ENCODE measurements at regions of chr2 and their contacts with region 1.

Region 1: GRCh38 chr2:85888684-85889626 is at the start of gene ST3GAL5:
- DNase-seq: peak; percentile 95
- H3K4me3 Mint-ChIP-seq: peak within 1 kb of the TSS; percentile 87
- H3K27ac Mint-ChIP-seq: peak within 1 kb of the TSS; percentile 93
- H3K4me1 Mint-ChIP-seq: peaks cover 68% of the 10 kb centered on the region
- H3K27me3 Mint-ChIP-seq: peaks cover 4% of the 10 kb centered on the region

Region 2: DNA sequence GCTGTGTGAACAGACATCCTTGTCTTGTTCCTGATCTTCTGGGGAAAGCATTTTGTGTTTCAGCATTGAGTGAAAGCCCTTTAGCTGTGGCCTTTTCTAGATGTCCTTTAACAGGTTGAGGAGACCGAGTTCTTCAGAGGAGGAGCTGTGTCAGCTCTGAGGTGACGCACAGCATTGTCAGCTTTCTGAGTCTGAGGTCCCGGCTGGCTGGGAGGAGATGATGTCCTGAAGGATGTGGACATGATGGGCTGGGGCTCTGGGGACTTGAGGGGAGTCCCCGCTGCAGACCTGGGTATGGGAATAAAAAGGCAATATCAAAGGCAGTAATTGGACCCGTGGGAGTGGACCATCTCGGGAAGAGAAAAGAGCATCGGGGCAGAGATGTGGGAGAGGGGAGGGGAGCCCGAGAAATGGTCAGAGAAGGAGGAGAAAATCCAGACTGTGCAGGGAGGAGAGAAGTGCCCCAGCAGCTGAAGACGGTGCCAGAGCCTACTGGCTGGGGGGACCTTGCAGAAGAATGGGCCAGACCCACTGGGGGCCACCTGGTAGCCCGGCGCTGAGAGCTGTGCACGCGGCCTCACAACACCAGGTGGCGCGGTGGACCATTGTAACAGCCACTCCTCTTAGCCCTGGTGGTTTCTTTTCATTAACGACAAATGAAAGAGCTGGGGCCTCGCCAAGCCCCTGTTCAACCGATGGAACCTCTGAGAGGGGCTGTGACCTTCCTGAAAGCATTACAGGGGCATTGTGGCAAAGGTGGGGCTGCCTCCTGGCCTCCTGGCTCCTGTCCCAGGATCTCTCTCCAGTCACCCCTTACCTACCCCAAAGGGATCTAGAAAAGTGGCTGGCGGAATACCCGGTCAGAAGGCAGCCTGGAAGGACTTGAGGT is 61.7 kb before region 1 on chr2:
- CTCF ChIA-PET with region 1: interaction called, 170 read pairs
- DNase-seq: peak; percentile 88
- H3K4me3 Mint-ChIP-seq: no peak overlapping the region
- H3K27ac Mint-ChIP-seq: no peak overlapping the region
- H3K4me1 Mint-ChIP-seq: peaks cover 33% of the 10 kb centered on the region
- H3K27me3 Mint-ChIP-seq: peaks cover 31% of the 10 kb centered on the region

Region 3: GRCh38 chr2:85852937-85853498 is 35.9 kb before region 1 on chr2:
- CTCF ChIA-PET with region 1: interaction called, 15 read pairs
- DNase-seq: peak; percentile 77
- H3K4me3 Mint-ChIP-seq: peak overlapping the region; percentile 80
- H3K27ac Mint-ChIP-seq: peak overlapping the region; percentile 100
- H3K4me1 Mint-ChIP-seq: peaks cover 75% of the 10 kb centered on the region
- H3K27me3 Mint-ChIP-seq: no peaks in the 10 kb centered on the region

Region 4: GRCh38 chr2:85900366-85900765 is 11.4 kb after region 1 on chr2:
- CTCF ChIA-PET with region 1: interaction called, 12 read pairs
- DNase-seq: peak; percentile 43
- H3K4me3 Mint-ChIP-seq: no peak overlapping the region
- H3K27ac Mint-ChIP-seq: peak overlapping the region; percentile 72
- H3K4me1 Mint-ChIP-seq: peaks cover 37% of the 10 kb centered on the region
- H3K27me3 Mint-ChIP-seq: peaks cover 9% of the 10 kb centered on the region

Region 5: GRCh38 chr2:85987266-85988174 is 98.6 kb after region 1 on chr2:
- CTCF ChIA-PET with region 1: no interaction called
- DNase-seq: no peak
- H3K4me3 Mint-ChIP-seq: no peak overlapping the region
- H3K27ac Mint-ChIP-seq: no peak overlapping the region
- H3K4me1 Mint-ChIP-seq: peaks cover 23% of the 10 kb centered on the region
- H3K27me3 Mint-ChIP-seq: peaks cover 19% of the 10 kb centered on the region

Region 6: GRCh38 chr2:86298411-86299379 is 409.7 kb after region 1 on chr2:
- CTCF ChIA-PET with region 1: no interaction called
- DNase-seq: no peak
- H3K4me3 Mint-ChIP-seq: no peak overlapping the region
- H3K27ac Mint-ChIP-seq: no peak overlapping the region
- H3K4me1 Mint-ChIP-seq: no peaks in the 10 kb centered on the region
- H3K27me3 Mint-ChIP-seq: peaks cover 52% of the 10 kb centered on the region